ENCODE measurements at regions of chr10 and their contacts with region 1.

Region 1: GRCh38 chr10:114911052-114911711 is 26.8 kb upstream of the TRUB1 start:
- DNase-seq: no peak
- H3K4me3 Mint-ChIP-seq: no peak overlapping the region
- H3K27ac Mint-ChIP-seq: peak overlapping the region; percentile 14
- H3K4me1 Mint-ChIP-seq: peaks cover 17% of the 10 kb centered on the region
- H3K27me3 Mint-ChIP-seq: peaks cover 5% of the 10 kb centered on the region

Region 2: GRCh38 chr10:114925587-114926586 is 14.7 kb after region 1 on chr10:
- intact Hi-C with region 1: loop called (anchors 1 kb)
- DNase-seq: peak; percentile 69
- H3K4me3 Mint-ChIP-seq: peak overlapping the region; percentile 33
- H3K27ac Mint-ChIP-seq: peak overlapping the region; percentile 67
- H3K4me1 Mint-ChIP-seq: peaks cover 9% of the 10 kb centered on the region
- H3K27me3 Mint-ChIP-seq: peaks cover 2% of the 10 kb centered on the region

Region 3: DNA sequence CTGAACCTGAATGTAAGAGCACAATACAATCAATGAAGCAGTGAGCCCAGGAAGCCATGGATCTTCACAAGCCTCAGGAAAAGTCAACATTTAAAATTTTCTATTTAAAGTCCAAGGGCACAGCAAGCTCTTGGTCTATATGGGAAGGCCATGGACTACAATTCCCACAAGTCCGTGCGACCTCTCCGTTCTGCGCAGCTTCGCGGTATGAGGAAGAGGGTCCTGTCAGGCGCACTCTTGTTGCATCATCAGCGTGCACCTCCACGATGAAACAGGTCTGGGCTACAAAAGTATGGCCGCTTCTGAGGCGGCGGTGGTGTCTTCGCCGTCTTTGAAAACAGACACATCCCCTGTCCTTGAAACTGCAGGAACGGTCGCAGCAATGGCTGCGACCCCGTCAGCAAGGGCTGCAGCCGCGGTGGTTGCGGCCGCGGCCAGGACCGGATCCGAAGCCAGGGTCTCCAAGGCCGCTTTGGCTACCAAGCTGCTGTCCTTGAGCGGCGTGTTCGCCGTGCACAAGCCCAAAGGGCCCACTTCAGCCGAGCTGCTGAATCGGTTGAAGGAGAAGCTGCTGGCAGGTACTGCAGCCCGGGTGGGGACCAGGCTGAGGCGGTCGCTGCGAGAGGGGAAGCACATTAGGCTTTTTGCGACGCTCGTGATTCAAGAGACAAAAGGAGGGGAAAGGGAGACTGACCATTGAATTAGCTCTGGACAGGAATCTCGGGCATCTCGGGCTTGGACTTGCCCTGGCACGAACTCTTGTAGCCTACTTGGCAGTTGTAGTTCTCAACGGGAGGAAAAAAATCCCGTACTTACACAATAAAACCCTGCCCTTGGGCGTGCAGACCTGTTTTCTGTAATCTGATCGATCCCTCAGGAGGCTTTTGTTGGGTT is 27.0 kb after region 1 on chr10 and contains the start of gene TRUB1:
- intact Hi-C with region 1: loop called (anchors 2 kb)
- DNase-seq: peak; percentile 96
- H3K4me3 Mint-ChIP-seq: peak within 1 kb of the TSS; percentile 94
- H3K27ac Mint-ChIP-seq: peak within 1 kb of the TSS; percentile 94
- H3K4me1 Mint-ChIP-seq: peaks cover 31% of the 10 kb centered on the region
- H3K27me3 Mint-ChIP-seq: no peaks in the 10 kb centered on the region
- total RNA-seq, gene TRUB1: 18.5 and 20.9 TPM in 2 replicates

Measured in activated CD4-positive, alpha-beta T cell treated with anti-CD3 and anti-CD28 coated beads, Interleukin-2, amount 10 ng/mL, durations not matched to agents 24 days and 14 days (primary cell).